BJ (cell line): ENCODE measurements at regions of chr12 and their contacts with region 1.

Region 1: DNA sequence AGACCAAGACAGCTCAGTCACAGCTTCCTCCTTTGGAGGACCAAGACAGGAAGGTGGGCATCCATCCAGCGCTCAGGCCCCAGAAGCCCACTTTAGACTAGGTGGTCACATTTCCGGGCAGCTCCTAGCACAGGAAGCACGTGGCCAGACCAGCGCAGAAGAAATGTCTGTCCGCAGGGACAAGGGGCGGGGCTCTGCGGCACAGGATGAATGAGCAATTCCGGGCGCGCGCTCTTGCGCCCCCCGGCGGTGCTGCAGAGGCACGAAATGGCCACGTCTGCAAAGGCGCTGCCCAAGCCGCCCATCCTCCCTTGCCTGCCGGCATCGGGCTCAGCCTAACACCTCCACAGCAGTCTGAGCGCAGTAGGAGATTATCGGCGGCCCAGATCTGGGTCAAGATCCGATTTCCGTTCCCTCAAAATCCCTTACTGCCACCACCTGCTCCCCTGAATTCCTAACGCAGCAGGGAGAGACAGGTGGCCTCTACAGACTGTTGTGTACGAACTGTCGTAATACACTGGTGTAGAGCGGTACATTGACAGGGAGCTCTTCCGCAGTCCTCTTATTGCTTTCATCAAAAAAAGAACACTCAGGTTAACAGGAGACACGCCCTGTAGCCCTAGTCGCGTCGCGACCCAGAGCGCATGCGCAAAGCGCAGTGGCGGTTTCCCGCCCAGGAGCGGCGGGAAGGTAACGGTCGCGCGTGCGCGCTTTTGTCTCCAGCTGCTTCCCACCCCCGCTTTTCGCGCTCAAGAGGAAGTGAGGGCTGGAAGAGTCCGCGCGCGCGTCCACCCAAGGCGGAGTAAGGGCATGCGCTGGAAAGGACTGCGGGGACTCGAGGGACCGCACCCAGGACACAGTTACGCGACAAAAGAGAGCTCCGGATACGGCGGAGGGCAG is 794 bp downstream of the TUBA1B start:
- DNase-seq: peak; percentile 70
- H3K4me3 ChIP-seq: peak overlapping the region; percentile 100
- H3K27me3 ChIP-seq: no peaks in the 10 kb centered on the region
- CTCF ChIP-seq: peak; percentile 96

Region 2: GRCh38 chr12:49088190-49088931 is 42.0 kb before region 1 on chr12:
- CTCF ChIA-PET with region 1: interaction called, 28 read pairs
- POLR2A ChIA-PET with region 1: no interaction called
- DNase-seq: peak; percentile 39
- H3K4me3 ChIP-seq: no peak overlapping the region
- H3K27me3 ChIP-seq: peaks cover 9% of the 10 kb centered on the region
- CTCF ChIP-seq: peak; percentile 93

Region 3: DNA sequence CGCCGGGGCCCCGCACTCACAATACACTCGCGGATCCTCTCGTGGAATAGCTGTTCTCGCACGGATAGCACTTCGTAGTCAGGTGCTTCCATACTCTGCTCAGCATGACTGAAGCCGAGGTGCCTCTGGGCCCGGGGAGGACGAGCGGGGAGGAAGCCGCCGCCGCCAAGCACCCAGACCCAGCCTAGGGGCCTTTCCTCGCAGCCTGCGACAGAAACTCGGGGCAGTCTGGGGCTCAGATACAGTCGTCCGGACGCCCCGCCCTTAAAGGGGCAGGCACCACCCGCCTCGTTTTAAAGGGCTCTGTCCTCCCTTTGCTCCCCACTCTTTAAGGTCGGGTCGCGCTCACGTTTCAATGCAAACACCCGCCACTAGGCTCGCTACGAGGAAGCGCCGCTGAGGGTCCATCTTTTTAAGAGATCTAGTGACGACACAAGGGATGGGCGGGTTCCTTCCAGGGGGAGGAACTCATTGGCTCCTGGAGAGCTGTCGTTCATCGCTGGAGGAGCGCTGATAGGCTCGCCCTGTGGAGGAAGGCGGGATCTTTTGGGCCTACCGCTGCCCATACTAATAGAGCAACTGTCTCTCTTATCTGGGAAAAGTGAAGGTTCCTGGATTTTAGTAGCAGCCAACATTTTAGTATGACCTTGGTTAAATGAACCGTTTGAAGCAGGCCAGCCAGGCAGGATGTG is 19.8 kb before region 1 on chr12 and contains the start of gene LMBR1L:
- CTCF ChIA-PET with region 1: interaction called, 13 read pairs
- POLR2A ChIA-PET with region 1: interaction called, 13 read pairs
- DNase-seq: peak; percentile 95
- H3K4me3 ChIP-seq: peak within 1 kb of the TSS; percentile 79
- H3K27me3 ChIP-seq: no peaks in the 10 kb centered on the region
- CTCF ChIP-seq: peak; percentile 67
- polyA plus RNA-seq, gene LMBR1L: 37.2 and 63.1 TPM in 2 replicates

Region 4: GRCh38 chr12:49232940-49233841 is 102.8 kb after region 1 on chr12:
- CTCF ChIA-PET with region 1: interaction called, 31 read pairs
- POLR2A ChIA-PET with region 1: interaction called, 11 read pairs
- DNase-seq: no peak
- H3K4me3 ChIP-seq: no peak overlapping the region
- H3K27me3 ChIP-seq: no peaks in the 10 kb centered on the region
- CTCF ChIP-seq: no peak